ENCODE measurements at regions of chr20 and their contacts with region 1.

Region 1: DNA sequence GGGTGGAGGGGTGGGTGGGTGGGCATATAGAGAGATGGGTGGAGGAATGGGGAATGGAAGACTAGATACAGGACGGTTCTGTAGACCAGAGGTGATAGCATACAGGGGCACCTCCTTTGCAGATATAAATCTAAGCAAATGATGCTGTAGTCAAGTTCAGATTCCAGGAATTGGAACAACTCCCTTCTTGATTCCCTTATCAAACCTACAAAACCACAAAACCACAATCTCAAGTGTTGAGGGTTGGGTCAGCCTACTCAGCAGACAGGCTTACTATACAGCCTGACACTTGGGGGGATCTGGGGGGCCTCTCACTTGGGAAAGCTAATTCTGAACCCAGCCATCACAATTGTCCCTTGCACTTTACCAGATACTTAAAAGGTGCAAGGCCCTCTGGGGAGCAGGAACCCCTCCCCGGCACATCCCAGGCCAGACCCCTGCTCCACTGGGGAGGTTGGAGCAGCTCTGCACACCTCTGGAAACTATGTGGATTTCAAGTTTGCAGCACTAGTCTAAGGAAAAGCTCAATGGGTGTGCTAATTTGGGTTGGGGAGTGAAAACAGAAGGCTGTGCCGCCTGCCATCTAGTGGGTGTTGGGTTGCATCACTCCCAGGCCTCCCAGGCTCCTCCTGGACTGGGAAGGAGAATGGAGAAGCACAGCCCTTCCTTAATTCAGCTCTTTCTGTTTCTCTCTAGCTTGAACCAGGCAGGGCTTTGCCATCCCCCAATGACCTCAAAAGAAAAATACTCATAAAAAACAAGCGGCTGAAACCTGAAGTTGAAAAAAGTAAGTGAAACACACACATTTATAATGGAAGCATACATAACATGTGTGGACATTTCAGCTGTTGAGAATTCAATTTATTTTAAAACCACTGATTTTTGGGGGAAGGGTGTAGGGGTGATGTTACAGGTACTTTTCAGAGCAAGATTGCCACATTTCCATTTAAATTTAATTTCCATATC is 121.2 kb upstream of the LAMP5 start:
- DNase-seq: peak; percentile 56 to 62
- ATAC-seq: peak; percentile 80 to 93 (median 90)
- H3K4me3 ChIP-seq: no peak overlapping the region
- H3K27ac ChIP-seq: no peak overlapping the region
- H3K4me1 ChIP-seq: peaks cover 0 to 24% (median 7%) of the 10 kb centered on the region in 9 donors
- H3K27me3 ChIP-seq: no peaks in the 10 kb centered on the region
- CTCF ChIP-seq: peak; percentile 49 to 84 (median 73)

Region 2: DNA sequence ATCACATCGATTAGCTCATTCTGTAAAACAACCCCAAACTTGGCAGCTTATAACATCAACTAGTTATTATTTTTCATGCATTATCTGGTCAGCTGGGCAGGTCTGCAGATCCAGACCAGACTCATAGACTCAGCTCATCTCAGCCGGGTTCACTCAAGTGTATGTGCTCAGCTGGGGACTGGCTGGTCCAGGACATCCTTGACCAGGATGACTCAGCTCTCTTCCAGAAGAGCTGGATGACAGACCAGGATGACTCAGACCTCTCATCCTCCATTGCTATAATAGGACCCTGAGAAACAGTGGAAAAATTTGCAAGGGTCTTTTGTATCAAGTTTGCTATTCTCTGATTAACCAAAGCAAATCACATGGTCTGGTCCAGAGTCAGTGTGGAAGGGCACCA is 636.8 kb before region 1 on chr20:
- intact Hi-C with region 1: loop called in 2 of 10 experiments (anchors 10 kb)
- DNase-seq: peak in 1 of 2 donors; percentile 5
- ATAC-seq: peak in 4 of 8 donors; percentile 37 to 91 (median 64)
- H3K4me3 ChIP-seq: no peak overlapping the region
- H3K27ac ChIP-seq: no peak overlapping the region
- H3K4me1 ChIP-seq: peaks cover 0 to 11% (median 0%) of the 10 kb centered on the region in 9 donors
- H3K27me3 ChIP-seq: no peaks in the 10 kb centered on the region
- CTCF ChIP-seq: no peak

Region 3: DNA sequence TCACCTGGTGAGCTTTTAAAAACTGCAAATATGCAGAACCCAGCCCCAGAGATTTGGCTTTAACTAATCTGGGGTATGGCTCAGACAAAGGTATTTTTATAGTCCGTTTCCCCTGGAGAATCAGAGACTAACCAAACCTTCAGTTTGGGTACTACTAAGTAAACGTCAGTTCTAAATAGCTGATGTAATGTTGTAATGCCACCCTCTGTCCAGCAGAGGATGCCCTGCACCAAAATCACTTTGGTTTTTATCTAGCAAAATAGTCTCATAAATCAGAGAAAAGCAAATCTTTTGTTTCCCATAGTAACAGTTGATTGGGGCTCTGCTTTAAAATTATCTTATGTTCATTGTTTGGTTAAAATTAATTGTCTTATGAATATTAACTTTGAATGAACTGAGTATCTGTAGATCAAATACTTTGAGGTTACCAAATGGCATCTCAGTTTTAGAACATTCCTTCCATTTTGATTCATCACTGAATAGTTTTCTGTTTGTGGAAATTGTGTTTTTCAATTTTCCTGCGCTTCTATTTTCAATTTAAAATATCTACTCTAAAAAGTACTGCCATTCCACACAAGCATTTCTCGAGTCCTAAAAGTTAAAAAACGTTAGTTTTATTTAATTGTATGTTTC is 602.6 kb before region 1 on chr20:
- intact Hi-C with region 1: loop called in 3 of 10 experiments (anchors 5 kb)
- DNase-seq: peak in 1 of 2 donors; percentile 19
- ATAC-seq: no peak
- H3K4me3 ChIP-seq: no peak overlapping the region
- H3K27ac ChIP-seq: no peak overlapping the region
- H3K4me1 ChIP-seq: peaks cover 0 to 10% (median 3%) of the 10 kb centered on the region in 9 donors
- H3K27me3 ChIP-seq: no peaks in the 10 kb centered on the region
- CTCF ChIP-seq: peak; percentile 91 to 98 (median 94)

Measured in heart right ventricle (tissue), 16 donors.